GM18951 (cell line): ENCODE measurements at regions of chr11 and their contacts with region 1.

Region 1: DNA sequence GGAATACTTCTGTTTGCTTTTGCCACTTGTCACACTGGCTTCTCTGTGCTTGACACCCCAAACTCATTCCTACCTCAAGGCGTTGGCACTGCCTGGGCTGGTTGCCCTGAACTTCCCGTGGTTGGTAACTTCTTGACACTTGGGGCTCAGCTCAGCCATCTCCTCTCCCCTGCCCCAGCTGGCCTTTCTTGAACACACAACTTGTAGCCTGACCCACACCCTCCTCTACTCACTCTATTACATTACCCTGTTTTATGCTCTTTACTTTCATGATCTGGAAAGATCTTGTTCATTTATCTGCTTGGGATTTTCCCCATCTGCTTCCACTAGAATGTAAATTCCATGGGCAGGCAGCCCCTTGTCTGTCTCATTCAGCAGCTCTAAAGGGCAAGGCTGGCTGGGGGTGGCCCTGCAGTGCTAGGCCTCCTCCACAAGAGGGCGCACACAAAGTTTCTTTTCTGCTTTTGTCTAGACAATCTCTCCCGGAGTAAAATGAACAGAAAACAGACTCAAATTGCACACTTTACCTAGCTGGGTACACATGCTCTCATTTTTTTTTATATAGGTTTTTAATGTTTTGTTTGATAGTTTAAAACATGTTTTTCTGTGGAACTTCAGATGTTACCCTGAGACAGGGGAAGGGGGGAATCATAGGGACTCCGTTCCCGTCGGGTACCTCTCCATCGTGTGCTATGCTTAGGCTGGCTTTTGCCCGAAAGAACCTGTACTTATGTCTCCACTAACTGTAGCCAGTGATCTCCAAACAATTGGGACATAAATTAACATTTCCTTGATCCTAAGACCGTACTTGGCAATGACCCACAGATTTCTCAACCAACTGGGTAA is 16.4 kb upstream of the MRGPRX2 start:
- POLR2A ChIP-seq: no peak

Region 2: DNA sequence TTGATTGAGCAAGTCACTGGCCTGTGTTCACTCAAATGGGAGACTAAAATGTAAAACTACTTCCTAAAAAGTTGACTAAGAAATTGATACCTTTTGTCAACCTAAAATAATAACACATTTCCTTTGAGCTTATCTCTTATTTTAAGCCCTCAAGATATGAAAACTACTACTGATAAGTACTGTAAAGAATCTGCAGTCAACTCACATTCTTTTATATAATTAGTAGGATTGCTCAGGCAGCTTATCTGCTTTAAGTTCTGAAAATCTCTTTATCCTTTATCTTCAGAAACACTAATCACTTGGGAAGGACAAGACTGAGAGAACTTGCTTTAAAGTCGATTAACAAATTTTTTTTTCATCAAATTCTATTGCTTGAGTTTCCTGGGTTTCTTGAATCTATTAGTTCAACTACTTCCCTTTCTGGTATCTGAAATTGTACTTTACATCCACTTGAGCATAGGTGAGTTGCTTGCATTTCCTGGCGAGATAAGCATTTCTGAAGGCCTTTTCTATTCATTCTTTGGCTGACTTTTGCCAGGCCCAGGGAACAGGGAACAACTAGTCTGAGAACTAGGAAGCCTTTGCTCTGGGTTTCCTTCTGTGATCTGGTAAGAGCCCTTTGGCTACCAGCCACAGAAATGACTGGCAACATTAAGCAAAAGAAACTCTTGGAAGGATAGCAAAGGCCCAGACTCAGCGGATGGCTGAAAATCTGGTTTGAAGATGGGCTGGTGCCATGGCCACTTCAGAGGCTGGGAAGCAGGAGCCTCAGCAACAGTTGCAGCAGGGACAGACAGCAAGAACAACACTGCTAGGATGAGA is 144.1 kb after region 1 on chr11:
- in situ Hi-C with region 1: no loop called
- POLR2A ChIP-seq: no peak

Region 3: GRCh38 chr11:19890308-19890707 is 813.3 kb after region 1 on chr11:
- in situ Hi-C with region 1: loop called (anchors 25 kb)
- POLR2A ChIP-seq: no peak